ENCODE measurements at regions of chr11 and their contacts with region 1.

Region 1: GRCh38 chr11:1694064-1694845 is 2.7 kb upstream of the KRTAP5-6 start:
- DNase-seq: peak; percentile 79
- H3K4me3 Mint-ChIP-seq: no peak overlapping the region
- H3K27ac Mint-ChIP-seq: no peak overlapping the region
- H3K4me1 Mint-ChIP-seq: peaks cover 4% of the 10 kb centered on the region
- H3K27me3 Mint-ChIP-seq: peaks cover 38% of the 10 kb centered on the region

Region 2: GRCh38 chr11:1652771-1653540 is 41.3 kb before region 1 on chr11:
- CTCF ChIA-PET with region 1: interaction called, 58 read pairs
- POLR2A ChIA-PET with region 1: interaction called, 5 read pairs
- DNase-seq: peak; percentile 77
- H3K4me3 Mint-ChIP-seq: no peak overlapping the region
- H3K27ac Mint-ChIP-seq: no peak overlapping the region
- H3K4me1 Mint-ChIP-seq: no peaks in the 10 kb centered on the region
- H3K27me3 Mint-ChIP-seq: peaks cover 13% of the 10 kb centered on the region

Region 3: GRCh38 chr11:1706634-1707400 is 12.6 kb after region 1 on chr11:
- CTCF ChIA-PET with region 1: interaction called, 27 read pairs
- POLR2A ChIA-PET with region 1: no interaction called
- DNase-seq: peak; percentile 38
- H3K4me3 Mint-ChIP-seq: no peak overlapping the region
- H3K27ac Mint-ChIP-seq: no peak overlapping the region
- H3K4me1 Mint-ChIP-seq: peaks cover 6% of the 10 kb centered on the region
- H3K27me3 Mint-ChIP-seq: peaks cover 21% of the 10 kb centered on the region

Region 4: DNA sequence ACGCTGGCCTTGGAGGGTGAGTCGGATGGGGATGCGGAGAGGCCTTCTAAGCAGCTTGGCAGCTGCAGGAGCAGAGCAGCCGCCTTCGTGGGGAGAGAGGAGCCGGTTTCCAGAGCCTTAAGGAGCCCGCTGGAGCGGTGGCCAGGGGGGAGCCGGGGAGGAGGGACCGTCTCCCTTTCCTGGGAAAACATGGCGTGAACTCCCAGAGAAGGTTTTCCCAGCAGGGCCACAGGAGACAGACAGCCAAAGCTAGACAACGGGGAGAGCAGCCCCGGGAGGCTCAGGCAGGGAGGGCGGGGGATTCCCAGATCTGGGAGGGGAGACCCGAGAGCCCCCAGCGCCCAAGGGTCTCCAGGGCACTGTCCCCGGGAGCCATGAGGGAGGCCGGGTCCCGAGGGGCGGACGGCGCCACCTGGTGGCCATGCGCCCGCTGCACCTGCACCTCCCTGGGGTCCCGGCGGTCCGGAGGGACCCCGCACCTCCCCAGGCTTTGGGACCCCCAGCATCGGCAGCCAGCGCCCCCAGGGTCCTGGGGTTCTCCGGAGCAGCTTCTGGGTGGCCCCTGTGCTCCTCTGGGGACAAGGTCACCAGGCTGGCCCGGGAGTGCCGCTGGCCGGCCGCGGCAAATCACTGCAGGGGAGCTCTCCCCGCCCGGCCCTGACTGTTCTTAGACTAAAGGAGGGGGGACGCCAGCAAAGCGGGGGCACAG is 138.1 kb after region 1 on chr11:
- CTCF ChIA-PET with region 1: interaction called, 287 read pairs
- POLR2A ChIA-PET with region 1: interaction called, 18 read pairs
- DNase-seq: peak; percentile 65
- H3K4me3 Mint-ChIP-seq: no peak overlapping the region
- H3K27ac Mint-ChIP-seq: no peak overlapping the region
- H3K4me1 Mint-ChIP-seq: no peaks in the 10 kb centered on the region
- H3K27me3 Mint-ChIP-seq: peaks cover 5% of the 10 kb centered on the region

Region 5: DNA sequence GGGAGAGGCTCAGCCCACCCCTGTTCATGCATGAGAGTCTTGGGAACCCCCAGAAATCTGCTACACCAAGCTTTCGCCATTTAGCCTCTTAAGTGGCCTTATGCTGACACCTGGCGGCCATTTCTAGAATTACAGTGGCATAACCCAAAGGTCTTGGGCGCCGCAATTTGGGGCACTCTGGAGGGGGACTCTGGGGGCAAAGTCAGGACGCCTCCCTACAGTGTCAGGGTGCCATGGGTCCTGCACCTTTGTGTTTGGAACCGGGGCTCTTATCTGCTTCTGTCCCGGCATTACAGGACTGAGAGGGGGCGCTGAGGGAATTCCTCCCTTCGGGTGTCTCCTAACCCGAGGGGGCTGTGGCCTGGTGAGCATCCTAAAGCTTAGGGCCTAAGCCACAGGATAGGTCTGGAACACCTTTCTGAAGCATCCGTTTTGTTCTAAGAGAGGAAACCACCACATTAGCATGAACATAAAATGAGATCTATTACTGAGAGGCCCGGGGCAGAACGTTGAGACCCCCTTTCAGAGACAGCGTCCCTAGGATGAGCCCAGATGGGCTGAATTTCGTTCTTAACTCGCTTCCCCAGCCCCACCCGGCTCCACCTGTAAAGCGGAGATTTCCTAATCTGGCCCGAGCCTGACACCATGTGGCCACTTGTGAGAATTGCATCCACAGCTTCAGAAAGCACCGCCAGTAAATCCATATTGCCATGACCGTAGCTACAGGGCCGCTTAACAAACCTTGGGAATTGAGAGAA is 457.4 kb after region 1 on chr11:
- CTCF ChIA-PET with region 1: interaction called, 12 read pairs
- POLR2A ChIA-PET with region 1: no interaction called
- DNase-seq: peak; percentile 82
- H3K4me3 Mint-ChIP-seq: no peak overlapping the region
- H3K27ac Mint-ChIP-seq: no peak overlapping the region
- H3K4me1 Mint-ChIP-seq: peaks cover 6% of the 10 kb centered on the region
- H3K27me3 Mint-ChIP-seq: peaks cover 38% of the 10 kb centered on the region

Region 6: GRCh38 chr11:2400069-2400760 is 706.0 kb after region 1 on chr11 and contains the start of gene TSSC4:
- CTCF ChIA-PET with region 1: no interaction called
- POLR2A ChIA-PET with region 1: no interaction called
- DNase-seq: peak; percentile 99
- H3K4me3 Mint-ChIP-seq: peak within 1 kb of the TSS; percentile 87
- H3K27ac Mint-ChIP-seq: peak within 1 kb of the TSS; percentile 87
- H3K4me1 Mint-ChIP-seq: peaks cover 19% of the 10 kb centered on the region
- H3K27me3 Mint-ChIP-seq: no peaks in the 10 kb centered on the region
- total RNA-seq, gene TSSC4: 46.4 to 46.5 TPM

Measured in activated CD4-positive, alpha-beta memory T cell treated with anti-CD3 and anti-CD28 coated beads, Interleukin-2, amount 10 ng/mL, durations not matched to agents 7 days and 5 days (primary cell).